Left ventricle myocardium superior (tissue), 1 donor: ENCODE measurements at regions of chr9 and their contacts with region 1.

Region 1: GRCh38 chr9:29129763-29130162 is 1556.5 kb upstream of the C9orf72 start:
- DNase-seq: no peak
- ATAC-seq: no peak

Region 2: DNA sequence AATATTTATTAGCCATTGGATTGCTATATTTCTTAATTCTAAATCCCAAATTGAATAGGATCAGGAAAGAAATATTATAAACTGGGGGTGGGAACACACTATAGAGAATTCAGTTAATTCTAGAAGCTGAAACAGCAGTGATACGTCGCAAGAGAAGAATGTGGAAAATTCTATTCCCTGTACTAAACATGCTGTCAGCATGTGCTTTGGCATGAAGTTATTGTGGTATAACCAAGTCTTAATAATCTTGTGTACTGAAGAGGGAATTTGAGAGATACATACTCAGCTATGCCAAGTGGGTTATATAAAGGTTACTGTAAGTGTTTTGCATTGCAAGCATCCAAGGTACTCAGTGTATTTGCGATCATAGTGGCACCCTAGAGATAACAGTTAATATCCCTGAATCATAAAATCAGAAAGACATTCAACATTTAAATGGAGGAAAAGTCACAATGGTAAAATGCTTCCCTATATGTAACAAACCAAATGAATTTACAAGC is 63.6 kb before region 1 on chr9:
- intact Hi-C with region 1: no loop called
- DNase-seq: no peak
- ATAC-seq: no peak

Region 3: GRCh38 chr9:29078063-29078660 is 51.6 kb before region 1 on chr9:
- intact Hi-C with region 1: no loop called
- DNase-seq: no peak
- ATAC-seq: no peak

Region 4: DNA sequence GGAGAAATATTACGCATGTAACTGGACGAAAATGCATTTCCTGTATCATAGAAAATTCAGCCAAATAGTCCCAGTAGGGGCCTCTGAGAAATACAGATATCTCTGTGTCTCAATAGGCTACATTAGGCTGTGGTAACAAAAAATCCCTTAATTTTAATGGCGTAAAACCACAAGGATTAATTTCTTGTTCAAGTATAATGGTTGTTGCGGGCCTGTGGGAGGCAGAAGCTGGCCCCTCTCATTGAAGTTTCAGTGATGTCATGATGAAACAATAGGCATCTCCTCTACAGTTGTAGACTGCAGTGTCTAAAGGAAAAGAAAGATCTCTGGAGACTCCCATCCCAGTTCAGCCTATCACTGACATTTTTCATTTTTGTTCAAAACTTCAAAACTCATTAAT is 69.1 kb after region 1 on chr9:
- intact Hi-C with region 1: loop called (anchors 10 kb)
- DNase-seq: no peak
- ATAC-seq: no peak